ENCODE measurements at regions of chr15 and their contacts with region 1.

Region 1: DNA sequence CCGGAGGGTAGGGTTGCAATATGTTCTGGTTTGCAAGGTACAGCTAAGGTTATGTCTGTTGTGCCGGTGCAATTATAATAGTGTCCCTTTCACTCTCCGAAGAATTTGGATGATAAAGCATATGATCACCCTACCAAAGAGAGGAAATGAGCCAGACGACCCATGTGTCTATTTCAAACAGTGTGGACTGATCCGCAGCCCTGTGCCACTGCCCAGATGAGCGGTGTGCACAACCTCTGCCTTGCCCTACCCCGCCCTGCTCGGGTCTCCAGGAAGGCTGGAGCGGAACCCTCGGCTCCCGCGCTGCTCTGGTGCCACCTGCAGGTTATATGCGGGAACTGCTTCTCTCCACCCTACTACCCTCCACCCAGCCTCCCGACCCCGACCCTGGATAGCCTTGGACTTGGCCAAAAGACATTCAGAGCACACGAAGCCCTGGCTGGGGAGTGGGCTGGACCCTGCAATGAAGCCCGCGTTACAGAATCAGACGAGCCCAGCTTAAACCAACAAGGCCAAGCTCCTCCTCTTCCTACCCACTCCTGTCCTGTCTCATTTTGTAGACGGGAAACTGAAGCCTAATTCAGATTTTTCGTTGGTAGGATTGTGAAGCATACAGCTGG is 68.4 kb upstream of the CHRNB4 start:
- DNase-seq: peak; percentile 72
- CTCF ChIP-seq: peak; percentile 79

Region 2: DNA sequence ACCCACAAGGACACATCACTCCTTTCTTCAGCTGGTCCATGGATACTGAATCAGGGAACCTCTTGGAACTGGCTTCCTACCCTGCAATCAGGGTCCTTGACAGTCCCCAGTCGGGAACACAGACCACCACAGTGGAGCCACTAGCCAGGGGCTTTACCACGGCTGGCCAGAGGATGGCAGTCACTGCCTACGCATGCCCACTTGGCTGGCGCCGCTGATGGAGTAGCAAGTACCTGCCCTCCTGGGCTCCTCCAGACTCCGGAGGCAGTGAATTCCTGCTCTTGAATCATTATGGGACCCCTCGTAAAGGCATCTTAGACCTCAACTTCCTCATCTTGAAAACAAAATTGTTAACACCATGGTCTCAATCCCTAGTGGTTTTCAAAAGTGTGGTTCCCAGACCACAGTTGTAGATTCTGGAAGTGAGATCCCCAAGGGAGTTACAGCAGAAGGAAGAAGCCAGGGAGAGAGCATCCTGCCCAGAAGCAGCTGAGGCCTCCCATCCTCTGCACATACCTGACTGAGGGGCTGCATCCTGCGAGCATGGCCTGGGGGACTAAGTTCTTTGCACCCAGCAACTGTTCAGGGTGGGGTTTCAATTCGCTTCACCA is 400.8 kb before region 1 on chr15:
- CTCF ChIA-PET with region 1: interaction called, 13 read pairs
- POLR2A ChIA-PET with region 1: no interaction called
- DNase-seq: peak; percentile 76
- CTCF ChIP-seq: peak; percentile 71

Region 3: GRCh38 chr15:78550194-78550593 is 159.2 kb before region 1 on chr15:
- CTCF ChIA-PET with region 1: no interaction called
- POLR2A ChIA-PET with region 1: no interaction called
- DNase-seq: no peak
- CTCF ChIP-seq: no peak

Region 4: DNA sequence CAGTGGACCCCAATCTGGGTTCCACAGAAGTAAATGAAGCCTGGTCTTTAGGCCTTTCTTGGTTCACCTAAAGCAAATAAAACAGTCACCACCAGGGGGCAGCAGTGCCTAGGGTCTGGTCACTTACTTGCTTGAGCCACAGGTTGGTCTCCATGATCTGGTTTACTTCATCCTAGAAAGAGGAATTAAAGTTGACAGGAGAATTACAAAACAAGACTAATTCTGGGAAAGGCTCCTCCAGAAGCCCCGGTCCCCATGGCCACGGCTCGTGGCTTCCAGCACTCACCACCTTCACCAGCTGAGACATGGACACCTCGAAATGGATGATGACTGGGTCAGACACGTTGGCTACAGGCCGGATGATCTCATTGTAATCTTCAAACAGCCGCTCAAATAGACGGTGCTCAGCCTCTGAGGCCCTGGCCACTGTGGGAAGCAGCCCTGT is 90.9 kb before region 1 on chr15:
- CTCF ChIA-PET with region 1: interaction called, 22 read pairs
- POLR2A ChIA-PET with region 1: no interaction called
- DNase-seq: peak; percentile 86
- CTCF ChIP-seq: peak; percentile 76

Region 5: GRCh38 chr15:78638658-78639314 is 70.6 kb before region 1 on chr15:
- CTCF ChIA-PET with region 1: interaction called, 30 read pairs
- POLR2A ChIA-PET with region 1: no interaction called
- DNase-seq: peak; percentile 70
- CTCF ChIP-seq: peak; percentile 40

Region 6: GRCh38 chr15:78695854-78696253 is 13.5 kb before region 1 on chr15:
- CTCF ChIA-PET with region 1: interaction called, 25 read pairs
- POLR2A ChIA-PET with region 1: no interaction called
- DNase-seq: no peak
- CTCF ChIP-seq: no peak